GM23248 (cell line): ENCODE measurements at regions of chr20 and their contacts with region 1.

Region 1: DNA sequence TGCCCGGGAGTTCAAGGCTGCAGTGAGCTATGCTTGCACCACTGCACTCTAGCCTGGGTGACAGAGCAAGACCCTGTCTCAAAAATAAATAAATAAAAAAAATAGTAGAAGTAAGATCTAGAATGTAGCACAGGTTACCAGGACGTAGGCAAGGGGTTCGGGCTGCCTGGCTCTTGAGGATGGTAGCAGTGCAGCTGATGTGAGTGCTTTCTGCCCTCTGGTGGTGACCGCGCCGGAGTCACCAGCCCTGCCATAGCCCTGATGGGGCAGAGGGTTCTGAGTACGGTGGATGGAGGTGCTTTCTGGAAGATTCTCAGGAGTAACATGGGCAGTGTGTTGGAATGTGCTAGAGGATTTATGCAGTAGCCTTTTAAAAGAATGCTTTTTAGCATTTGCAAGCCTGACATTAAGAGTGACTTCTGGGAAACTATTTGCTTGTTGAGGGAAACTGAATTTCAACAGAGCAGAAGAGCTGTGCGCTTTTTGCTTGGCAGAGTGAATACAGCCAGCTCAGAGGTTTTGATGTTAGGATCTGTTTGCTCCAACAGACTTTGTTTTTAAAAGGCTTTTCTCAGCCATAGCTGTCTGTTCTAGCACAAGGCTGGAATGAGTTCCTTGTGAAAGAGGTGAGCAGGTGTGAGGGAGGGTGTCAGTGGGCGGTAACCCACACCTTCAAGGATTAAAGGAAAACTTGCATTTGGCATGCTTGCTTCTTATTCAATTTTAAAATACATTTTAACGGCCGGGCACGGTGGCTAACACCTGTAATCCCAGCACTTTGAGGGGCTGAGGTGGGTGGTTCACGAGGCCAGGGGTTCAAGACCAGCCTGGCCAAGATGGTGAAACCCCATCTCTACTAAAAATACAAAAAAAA is 65.9 kb downstream of the PTPN1 start:
- DNase-seq: peak; percentile 79
- H3K4me3 ChIP-seq: no peak overlapping the region
- H3K27ac ChIP-seq: no peak overlapping the region
- H3K4me1 ChIP-seq: peaks cover 14% of the 10 kb centered on the region
- H3K27me3 ChIP-seq: no peaks in the 10 kb centered on the region

Region 2: DNA sequence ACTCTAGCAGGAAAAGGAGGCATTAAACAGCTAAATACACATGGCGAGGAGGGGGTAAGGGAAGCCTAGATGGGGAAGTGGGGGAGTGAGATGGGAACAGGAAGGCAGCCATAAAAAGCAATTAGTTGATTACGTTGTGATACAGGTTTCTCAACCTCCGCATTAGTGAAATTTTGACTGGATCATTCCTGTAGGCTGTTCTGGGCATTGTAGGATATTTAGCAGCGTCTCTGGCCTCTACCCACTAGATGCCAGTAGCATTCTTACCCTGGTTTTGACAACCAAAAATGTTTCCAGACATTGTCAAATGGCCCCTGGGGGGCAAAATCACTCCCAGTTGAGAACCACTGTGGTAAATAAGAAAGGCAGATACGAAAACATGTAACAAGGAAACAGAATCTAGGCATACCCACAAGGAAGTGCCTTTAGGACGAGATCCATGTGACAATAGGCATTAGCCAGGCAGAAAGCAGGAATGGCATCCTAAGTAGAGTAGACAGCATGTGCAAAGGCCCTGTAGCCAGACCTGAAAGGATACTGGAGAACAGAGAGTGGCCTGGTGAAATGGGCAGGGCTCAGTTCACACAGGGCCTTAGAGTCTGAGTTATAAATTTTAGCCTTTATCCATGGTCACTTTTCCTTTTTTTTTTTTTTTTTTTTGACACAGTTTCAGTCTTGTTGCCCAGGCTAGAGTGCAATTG is 91.7 kb before region 1 on chr20:
- in situ Hi-C with region 1: loop called (anchors 10 kb)
- DNase-seq: no peak
- H3K4me3 ChIP-seq: peak overlapping the region; percentile 74
- H3K27ac ChIP-seq: peak overlapping the region; percentile 75
- H3K4me1 ChIP-seq: 0 out of 2 replicates have a peak, but pooled peaks cover 5% of the 10 kb centered on the region
- H3K27me3 ChIP-seq: no peaks in the 10 kb centered on the region